T-cell (primary cell): ENCODE measurements at regions of chr13 and their contacts with region 1.

Region 1: DNA sequence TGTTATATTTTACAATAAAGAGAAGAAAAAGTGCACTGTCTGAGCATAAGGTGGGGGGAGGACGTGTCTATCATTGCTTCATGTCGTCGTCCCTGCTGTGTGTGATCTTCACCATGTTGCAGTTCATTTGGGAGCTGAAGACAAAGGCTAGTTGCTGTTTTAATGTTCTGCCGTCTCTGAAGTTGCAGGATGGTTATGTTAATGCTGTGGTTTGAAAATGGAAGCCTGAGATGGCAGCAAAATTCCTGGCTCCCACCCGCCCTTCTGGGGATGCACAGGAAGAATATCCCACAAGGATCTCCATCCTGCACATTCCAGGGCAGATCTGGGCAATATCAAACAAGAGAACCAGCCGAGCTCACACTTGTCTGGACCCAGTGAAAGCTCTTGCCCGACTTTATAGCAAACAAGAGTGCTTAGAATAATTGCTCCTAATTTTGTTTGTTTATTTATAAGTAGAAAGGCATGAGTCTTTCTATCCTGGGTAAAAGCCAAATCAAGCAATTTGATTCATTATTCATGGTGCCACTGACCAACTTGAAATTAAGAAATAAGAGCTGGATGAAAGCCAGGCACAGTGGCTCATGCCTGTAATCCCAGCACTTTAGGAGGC is 110.3 kb upstream of the ABCC4 start:
- DNase-seq: no peak
- ATAC-seq: no peak
- H3K4me3 ChIP-seq: no peak overlapping the region
- H3K4me3 Mint-ChIP-seq: no peak overlapping the region
- H3K27ac ChIP-seq: no peak overlapping the region
- H3K27ac Mint-ChIP-seq: no peak overlapping the region
- H3K4me1 ChIP-seq: no peaks in the 10 kb centered on the region
- H3K4me1 Mint-ChIP-seq: no peaks in the 10 kb centered on the region
- H3K27me3 ChIP-seq: peaks cover 0 to 17% of the 10 kb centered on the region in 2 experiments
- H3K27me3 Mint-ChIP-seq: peaks cover 2 to 4% of the 10 kb centered on the region in 2 donors

Region 2: DNA sequence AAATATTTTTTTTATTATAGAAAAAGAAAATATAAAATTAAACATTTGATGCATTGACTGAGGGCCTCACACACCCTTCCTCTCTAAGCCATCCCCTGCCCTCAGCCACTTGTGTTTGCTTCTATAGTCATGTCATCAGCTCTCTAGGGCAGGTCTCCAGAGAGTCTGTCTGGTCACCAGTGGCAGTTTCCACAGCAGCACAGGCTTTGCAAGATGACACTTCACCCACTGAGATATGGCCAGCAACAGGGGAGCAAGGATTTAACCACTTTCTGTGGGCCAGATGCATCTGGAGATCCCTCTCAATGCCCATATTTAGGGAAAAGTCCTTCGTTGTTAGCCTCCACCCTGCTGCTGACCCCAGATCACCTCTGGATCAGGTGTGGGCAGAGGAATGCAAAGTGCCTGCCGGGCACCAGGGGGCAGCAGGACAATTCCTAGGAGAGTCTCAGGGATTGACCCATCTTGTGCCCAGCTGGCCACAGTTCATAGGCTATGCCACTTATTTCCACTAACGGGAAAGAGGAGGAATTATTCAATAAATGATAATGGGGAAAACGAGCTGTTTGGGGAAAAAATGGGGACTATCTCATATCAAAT is 115.1 kb before region 1 on chr13:
- CTCF ChIA-PET with region 1: interaction called in 1 of 2 experiments, 10 read pairs
- POLR2A ChIA-PET with region 1: no interaction called
- DNase-seq: peak in 6 of 35 experiments; percentile 3 to 33 (median 16)
- ATAC-seq: no peak
- H3K4me3 ChIP-seq: no peak overlapping the region
- H3K4me3 Mint-ChIP-seq: no peak overlapping the region
- H3K27ac ChIP-seq: no peak overlapping the region
- H3K27ac Mint-ChIP-seq: no peak overlapping the region
- H3K4me1 ChIP-seq: peaks cover 2 to 8% of the 10 kb centered on the region in 2 experiments
- H3K4me1 Mint-ChIP-seq: peaks cover 22 to 33% (median 24%) of the 10 kb centered on the region in 3 donors
- H3K27me3 ChIP-seq: no peaks in the 10 kb centered on the region
- H3K27me3 Mint-ChIP-seq: no peaks in the 10 kb centered on the region